ENCODE measurements at regions of chr15 and their contacts with region 1.

Region 1: DNA sequence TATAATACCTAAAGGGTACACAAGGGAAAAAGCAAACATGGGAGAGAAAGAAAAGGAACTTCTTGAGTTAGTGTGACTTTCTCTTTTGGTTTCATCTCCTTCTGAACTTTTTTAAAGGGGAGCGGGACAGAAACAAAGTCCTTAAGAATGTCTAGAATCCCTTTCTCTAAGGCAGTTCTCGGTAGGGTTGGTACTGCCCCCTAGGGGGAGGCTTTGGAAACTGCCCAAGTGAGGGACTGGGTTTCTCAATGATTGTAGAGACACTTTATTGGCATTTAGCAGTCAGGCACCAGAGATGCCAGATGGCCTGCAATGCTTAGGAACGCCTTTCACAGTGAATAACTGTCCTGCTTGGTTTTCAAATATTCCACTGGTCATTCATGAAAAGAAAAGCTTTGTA is 172.7 kb downstream of the WDR72 start:
- DNase-seq: peak; percentile 80
- H3K4me3 ChIP-seq: no peak overlapping the region
- H3K27ac ChIP-seq: no peak overlapping the region
- H3K4me1 ChIP-seq: no peaks in the 10 kb centered on the region
- H3K27me3 ChIP-seq: no peaks in the 10 kb centered on the region
- CTCF ChIP-seq: peak; percentile 62

Region 2: DNA sequence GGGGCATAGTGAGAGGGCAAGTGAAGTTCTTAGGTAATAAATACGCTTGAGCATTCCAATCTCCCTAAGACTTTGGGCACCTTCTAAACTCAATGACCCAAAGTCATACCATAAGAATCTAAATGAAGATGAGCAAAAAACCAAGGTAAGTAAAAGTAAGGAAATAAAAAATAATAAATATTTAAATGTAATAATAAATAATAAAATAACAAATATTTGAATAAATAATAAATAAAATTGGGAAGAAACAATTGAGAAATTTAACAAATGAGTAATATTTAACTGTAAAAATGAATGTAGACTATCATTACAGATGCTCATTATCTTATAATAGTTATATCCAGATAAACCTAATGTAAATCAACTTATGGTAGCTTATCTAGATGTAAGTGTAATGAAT is 219.1 kb before region 1 on chr15:
- intact Hi-C with region 1: no loop called
- DNase-seq: no peak
- H3K4me3 ChIP-seq: no peak overlapping the region
- H3K27ac ChIP-seq: no peak overlapping the region
- H3K4me1 ChIP-seq: no peaks in the 10 kb centered on the region
- H3K27me3 ChIP-seq: no peaks in the 10 kb centered on the region
- CTCF ChIP-seq: no peak

Region 3: DNA sequence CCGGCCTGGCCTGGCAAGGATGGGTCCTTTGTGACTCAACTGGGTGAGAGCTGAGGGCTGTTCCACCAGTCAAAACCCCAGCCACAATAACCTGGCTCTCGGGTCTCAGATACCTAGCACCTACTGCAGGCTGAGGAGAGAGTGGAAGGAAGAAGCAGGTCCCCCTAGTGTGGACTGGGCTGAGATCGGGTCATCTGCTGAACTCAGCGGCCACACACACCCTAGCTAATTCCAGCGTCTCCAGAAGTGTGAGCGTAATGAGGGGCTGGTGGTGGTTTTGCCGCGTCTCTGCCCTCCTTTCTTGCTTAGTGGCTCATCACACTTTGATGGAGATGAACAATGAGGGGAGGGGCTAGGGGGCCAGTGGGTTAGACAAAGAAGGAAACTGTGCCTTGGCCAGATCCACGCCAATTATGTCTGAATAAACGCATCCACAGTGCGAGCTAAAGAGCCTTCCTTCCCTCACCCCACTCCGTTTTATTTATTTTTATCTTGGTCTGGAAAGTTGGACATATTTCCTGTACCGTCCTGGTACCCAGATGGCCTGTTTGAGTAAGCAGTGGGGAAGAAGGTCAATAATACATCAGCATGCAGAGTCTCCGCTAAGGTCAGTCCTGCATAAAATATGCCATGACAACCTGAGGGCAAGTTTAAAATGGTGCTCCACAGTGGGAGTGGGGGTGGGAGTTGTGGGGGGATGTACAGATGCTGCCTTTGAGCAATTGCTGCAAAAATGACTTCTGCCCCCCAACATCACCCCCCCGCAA is 197.3 kb before region 1 on chr15:
- intact Hi-C with region 1: loop called (anchors 5 kb)
- DNase-seq: no peak
- H3K4me3 ChIP-seq: no peak overlapping the region
- H3K27ac ChIP-seq: no peak overlapping the region
- H3K4me1 ChIP-seq: no peaks in the 10 kb centered on the region
- H3K27me3 ChIP-seq: no peaks in the 10 kb centered on the region
- CTCF ChIP-seq: no peak

Region 4: GRCh38 chr15:53658827-53659555 is 72.2 kb after region 1 on chr15:
- intact Hi-C with region 1: loop called (anchors 10 kb)
- DNase-seq: no peak
- H3K4me3 ChIP-seq: no peak overlapping the region
- H3K27ac ChIP-seq: no peak overlapping the region
- H3K4me1 ChIP-seq: no peaks in the 10 kb centered on the region
- H3K27me3 ChIP-seq: no peaks in the 10 kb centered on the region
- CTCF ChIP-seq: no peak